ENCODE measurements at regions of chr4 and their contacts with region 1.

Region 1: GRCh38 chr4:20422398-20422797 is 170.7 kb downstream of the SLIT2 start:
- DNase-seq: peak; percentile 18 to 63 (median 37)
- ATAC-seq: peak; percentile 90
- H3K4me3 ChIP-seq: no peak overlapping the region
- H3K27ac ChIP-seq: no peak overlapping the region
- H3K4me1 ChIP-seq: no peaks in the 10 kb centered on the region
- H3K27me3 ChIP-seq: no peaks in the 10 kb centered on the region
- CTCF ChIP-seq: peak; percentile 48 to 52 (median 48)
- EP300 ChIP-seq: no peak
- POLR2A ChIP-seq: no peak
- RAD21 ChIP-seq: peak; percentile 31 to 52

Region 2: DNA sequence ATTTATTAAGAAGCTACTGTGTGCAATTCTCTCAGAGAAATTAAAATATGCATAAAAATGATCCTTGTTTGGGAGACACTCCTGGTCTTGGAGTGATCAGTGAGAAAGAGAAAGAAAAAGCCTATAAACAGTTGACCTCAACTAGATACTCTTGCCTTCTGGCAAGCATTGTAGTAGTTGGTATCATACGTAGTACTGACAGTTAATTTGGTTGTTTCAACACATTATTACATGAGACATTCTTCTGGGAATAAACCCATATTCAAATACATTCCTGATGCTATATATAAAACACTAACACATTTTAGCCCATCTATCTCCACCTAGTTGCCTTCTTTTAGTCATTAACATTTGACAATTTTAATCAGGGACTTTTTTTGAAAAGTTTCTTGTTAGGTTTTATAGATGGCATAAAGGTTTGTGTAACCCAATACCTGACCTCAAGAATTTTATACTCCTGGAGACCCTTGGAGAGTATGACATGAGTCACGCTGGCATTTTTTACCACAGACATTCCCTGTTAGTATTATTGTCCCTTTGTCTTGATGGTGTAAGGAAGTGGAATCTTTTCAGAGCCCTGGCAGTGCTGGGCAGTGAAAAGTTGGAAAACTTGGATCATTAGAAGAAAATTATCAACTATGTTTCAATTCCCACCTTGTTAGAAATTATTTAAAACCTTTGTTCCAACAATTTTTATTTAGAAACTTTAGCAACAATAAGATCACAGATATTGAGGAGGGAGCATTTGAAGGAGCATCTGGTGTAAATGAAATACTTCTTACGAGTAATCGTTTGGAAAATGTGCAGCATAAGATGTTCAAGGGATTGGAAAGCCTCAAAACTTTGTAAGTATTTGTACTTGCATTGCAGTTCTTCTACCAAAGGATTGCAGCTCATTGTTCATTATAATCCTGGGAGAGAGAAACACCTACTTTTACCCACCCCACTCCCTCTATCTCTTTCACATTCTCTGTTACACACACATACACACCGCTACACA is 110.8 kb after region 1 on chr4:
- CTCF ChIA-PET with region 1: no interaction called
- POLR2A ChIA-PET with region 1: no interaction called
- in situ Hi-C with region 1: loop called (anchors 10 kb)
- intact Hi-C with region 1: no loop called
- DNase-seq: no peak
- ATAC-seq: no peak
- H3K4me3 ChIP-seq: no peak overlapping the region
- H3K27ac ChIP-seq: no peak overlapping the region
- H3K4me1 ChIP-seq: no peaks in the 10 kb centered on the region
- H3K27me3 ChIP-seq: no peaks in the 10 kb centered on the region
- CTCF ChIP-seq: no peak
- EP300 ChIP-seq: no peak
- POLR2A ChIP-seq: no peak
- RAD21 ChIP-seq: no peak

Region 3: DNA sequence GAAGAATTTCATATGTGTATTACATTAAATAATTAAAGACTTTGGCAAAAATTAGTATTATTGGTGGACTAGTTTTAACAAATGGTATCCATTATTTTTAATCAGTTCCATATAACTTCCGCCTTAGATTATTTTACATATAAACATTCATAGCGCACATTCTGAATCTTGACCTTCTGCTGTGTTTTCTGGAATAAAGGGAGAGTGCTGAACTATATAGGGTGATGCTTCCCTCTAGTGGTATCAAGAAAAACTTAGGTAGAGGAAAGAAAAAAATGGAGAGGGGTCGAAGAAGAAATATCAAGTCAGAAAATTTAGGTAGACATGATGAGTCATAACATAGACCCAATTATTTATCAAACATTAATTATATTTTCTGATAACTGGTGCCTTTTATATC is 122.2 kb after region 1 on chr4:
- CTCF ChIA-PET with region 1: interaction called, 4 read pairs
- POLR2A ChIA-PET with region 1: no interaction called
- in situ Hi-C with region 1: loop called (anchors 10 kb)
- intact Hi-C with region 1: loop called (anchors 1 kb)
- DNase-seq: peak in 3 of 4 experiments; percentile 10 to 21 (median 13)
- ATAC-seq: peak; percentile 54; the same call in 2 of the 3 replicates
- H3K4me3 ChIP-seq: no peak overlapping the region
- H3K27ac ChIP-seq: no peak overlapping the region
- H3K4me1 ChIP-seq: no peaks in the 10 kb centered on the region
- H3K27me3 ChIP-seq: no peaks in the 10 kb centered on the region
- CTCF ChIP-seq: peak; percentile 19 to 57 (median 34); a peak in 3 of 6 replicates
- EP300 ChIP-seq: no peak
- POLR2A ChIP-seq: no peak
- RAD21 ChIP-seq: peak in 1 of 2 experiments; percentile 53; a peak in 3 of 4 replicates

Region 4: GRCh38 chr4:20760053-20760452 is 337.7 kb after region 1 on chr4:
- CTCF ChIA-PET with region 1: no interaction called
- POLR2A ChIA-PET with region 1: no interaction called
- in situ Hi-C with region 1: no loop called
- intact Hi-C with region 1: loop called (anchors 1 kb)
- DNase-seq: peak; percentile 23 to 49 (median 32)
- ATAC-seq: peak; percentile 85
- H3K4me3 ChIP-seq: no peak overlapping the region
- H3K27ac ChIP-seq: no peak overlapping the region
- H3K4me1 ChIP-seq: no peaks in the 10 kb centered on the region
- H3K27me3 ChIP-seq: no peaks in the 10 kb centered on the region
- CTCF ChIP-seq: peak; percentile 41 to 60 (median 50); a peak in 5 of 6 replicates
- EP300 ChIP-seq: no peak
- POLR2A ChIP-seq: no peak
- RAD21 ChIP-seq: peak; percentile 29 to 56